HepG2 (cell line): ENCODE measurements at regions of chr14 and their contacts with region 1.

Region 1: GRCh38 chr14:99280852-99281251 is 8.9 kb upstream of the BCL11B start:
- DNase-seq: no peak
- ATAC-seq: no peak
- H3K4me3 ChIP-seq: no peak overlapping the region
- H3K27ac ChIP-seq: no peak overlapping the region
- H3K4me1 ChIP-seq: no peaks in the 10 kb centered on the region
- H3K27me3 ChIP-seq: peaks cover 1 to 55% of the 10 kb centered on the region in 2 experiments; a peak in 4 of 5 replicates
- CTCF ChIP-seq: no peak
- EP300 ChIP-seq: no peak
- POLR2A ChIP-seq: no peak
- RAD21 ChIP-seq: no peak

Region 2: DNA sequence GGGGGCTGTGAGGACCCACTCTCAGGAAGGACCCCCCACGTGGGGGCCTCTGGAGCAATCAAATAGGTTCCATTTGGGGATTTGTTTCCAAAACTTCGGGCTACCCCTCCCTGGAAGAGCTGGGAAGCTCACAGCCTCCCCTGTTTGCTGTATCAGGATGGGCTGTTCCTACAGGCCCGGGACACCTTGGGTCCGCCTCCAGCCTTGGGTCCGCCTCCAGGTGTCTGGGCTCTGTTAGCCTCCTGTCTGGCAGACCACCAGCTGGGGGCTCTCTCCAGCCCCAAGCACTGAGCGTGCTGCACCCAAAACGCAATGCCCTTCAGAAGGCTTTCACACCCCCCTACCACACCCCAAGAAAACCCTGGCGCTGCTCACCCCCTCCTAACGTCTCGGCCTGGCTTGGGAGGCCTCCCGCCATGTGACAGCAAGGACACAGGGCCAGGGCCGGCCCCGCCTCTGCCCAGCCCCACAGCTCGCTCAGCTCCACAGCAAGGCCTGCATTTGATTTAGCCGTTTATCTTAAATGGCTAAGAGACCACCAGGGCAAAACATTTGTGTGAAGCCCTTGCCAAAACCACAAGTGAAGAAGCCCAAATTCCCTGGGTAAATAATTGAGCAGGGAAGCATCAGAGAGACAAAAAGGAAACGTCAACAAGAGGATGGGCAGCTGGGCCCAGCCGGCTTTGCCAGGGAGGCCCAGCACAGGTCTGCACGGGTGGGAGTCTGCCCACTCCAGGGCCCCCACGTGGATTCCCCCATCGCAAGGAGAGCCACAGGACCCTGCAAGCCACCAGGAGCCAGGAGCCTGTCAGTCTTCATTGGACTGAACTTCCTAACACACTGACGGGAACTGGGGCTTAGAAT is 48.8 kb before region 1 on chr14:
- CTCF ChIA-PET with region 1: no interaction called
- POLR2A ChIA-PET with region 1: no interaction called
- in situ Hi-C with region 1: no loop called
- intact Hi-C with region 1: loop called (anchors 1 kb)
- DNase-seq: no peak
- ATAC-seq: peak; percentile 63
- H3K4me3 ChIP-seq: no peak overlapping the region
- H3K27ac ChIP-seq: no peak overlapping the region
- H3K4me1 ChIP-seq: no peaks in the 10 kb centered on the region
- H3K27me3 ChIP-seq: peaks cover 0 to 31% of the 10 kb centered on the region in 2 experiments; a peak in 1 of 5 replicates
- CTCF ChIP-seq: no peak
- EP300 ChIP-seq: no peak
- POLR2A ChIP-seq: no peak
- RAD21 ChIP-seq: no peak